ENCODE measurements at regions of chr4 and their contacts with region 1.

Region 1: DNA sequence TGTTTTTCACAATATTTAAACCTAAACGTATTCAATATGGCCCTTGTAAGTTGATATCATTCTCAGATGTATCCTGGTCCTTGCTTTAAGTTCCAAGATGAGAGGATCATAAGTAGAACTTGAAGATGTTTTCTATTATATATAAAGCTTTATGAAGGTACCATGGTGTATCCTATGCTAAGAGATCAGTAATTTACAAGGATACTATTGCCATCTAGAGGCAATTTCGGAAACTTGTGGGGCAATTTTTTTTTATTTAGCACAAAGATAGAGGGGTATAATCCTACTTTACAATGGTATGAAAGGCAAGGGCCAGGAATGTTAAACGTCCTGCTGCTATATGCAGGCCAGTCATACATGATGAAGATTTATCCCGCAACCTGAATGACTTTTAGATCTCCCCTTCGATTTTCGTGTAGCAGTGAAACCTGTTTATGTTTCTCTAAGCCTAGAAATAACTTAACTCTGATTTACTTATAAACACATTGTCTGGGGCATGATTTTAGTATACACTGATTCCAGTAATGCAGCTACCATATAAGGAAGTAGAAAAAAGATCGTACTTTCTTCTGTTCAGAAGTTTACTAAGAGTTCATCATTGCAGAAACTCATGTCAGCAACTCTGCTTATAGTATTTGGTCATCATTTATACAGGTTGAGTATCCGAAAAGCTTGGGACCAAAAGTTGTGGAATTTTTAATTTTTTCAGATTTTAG is 2.6 kb downstream of the SLC25A31 start:
- DNase-seq: peak; percentile 26

Region 2: DNA sequence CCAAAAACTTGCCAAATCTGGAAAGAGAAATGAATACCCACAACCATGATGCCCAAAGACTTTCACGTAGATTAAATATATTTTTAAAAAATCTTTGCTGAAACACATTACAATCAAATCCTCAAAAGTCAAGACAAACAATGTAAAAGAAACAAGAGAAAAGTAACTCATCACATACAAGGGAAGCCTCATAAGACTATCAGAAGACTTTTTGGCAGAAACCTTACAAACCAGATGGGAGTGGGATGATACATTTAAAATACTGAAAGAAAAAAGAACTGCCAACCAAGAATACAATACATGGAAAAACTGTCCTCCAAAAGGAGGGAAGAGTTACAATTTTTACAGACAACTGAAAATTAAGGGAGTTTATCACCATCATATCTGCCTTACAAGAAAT is 419.0 kb before region 1 on chr4:
- CTCF ChIA-PET with region 1: no interaction called
- POLR2A ChIA-PET with region 1: no interaction called
- DNase-seq: no peak

Region 3: GRCh38 chr4:127586922-127587571 is 145.7 kb before region 1 on chr4:
- CTCF ChIA-PET with region 1: no interaction called
- POLR2A ChIA-PET with region 1: no interaction called
- DNase-seq: peak; percentile 41

Region 4: GRCh38 chr4:127604949-127605709 is 127.6 kb before region 1 on chr4:
- CTCF ChIA-PET with region 1: interaction called, 16 read pairs
- POLR2A ChIA-PET with region 1: no interaction called
- DNase-seq: no peak

Measured in HEK293T (cell line).